ENCODE measurements at regions of chr2 and their contacts with region 1.

Region 1: DNA sequence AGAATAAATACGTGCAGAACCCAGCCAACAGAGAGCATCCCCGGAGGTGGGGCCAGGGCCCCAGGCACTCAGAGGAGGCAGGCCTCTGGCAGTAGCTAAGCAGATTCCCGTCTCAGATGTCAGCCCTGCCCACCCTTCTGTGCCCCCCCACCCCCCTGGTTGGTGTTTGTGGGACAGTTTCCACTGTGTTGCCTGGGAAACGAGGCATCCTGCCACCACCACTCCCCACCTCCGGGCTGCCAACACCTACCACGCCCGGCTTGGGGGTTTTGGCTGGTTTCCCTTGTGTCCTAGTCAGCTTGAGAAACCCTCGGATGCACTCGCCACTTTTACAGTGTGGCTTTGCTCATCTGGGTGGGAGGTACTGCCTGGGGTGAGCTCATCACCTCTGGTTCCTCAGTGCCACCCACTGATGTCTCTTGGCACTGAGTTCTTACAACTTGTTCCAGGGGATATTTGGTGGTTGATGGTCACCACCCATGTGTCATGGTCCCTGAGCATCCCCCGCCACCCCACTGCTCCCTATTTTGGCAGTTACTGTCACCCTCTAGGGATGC is 72.4 kb upstream of the YWHAQ start:
- DNase-seq: peak; percentile 89 to 98 (median 94)
- H3K4me3 ChIP-seq: no peak overlapping the region
- H3K4me3 Mint-ChIP-seq: peak overlapping the region in 7 of 8 donors; percentile 11 to 80 (median 55)
- H3K27ac ChIP-seq: peak overlapping the region; percentile 88
- H3K27ac Mint-ChIP-seq: peak overlapping the region; percentile 94 to 98 (median 97)
- H3K4me1 ChIP-seq: peaks cover 50% of the 10 kb centered on the region
- H3K4me1 Mint-ChIP-seq: peaks cover 35 to 83% (median 52%) of the 10 kb centered on the region in 4 donors
- H3K27me3 ChIP-seq: no peaks in the 10 kb centered on the region
- H3K27me3 Mint-ChIP-seq: no peaks in the 10 kb centered on the region

Region 2: DNA sequence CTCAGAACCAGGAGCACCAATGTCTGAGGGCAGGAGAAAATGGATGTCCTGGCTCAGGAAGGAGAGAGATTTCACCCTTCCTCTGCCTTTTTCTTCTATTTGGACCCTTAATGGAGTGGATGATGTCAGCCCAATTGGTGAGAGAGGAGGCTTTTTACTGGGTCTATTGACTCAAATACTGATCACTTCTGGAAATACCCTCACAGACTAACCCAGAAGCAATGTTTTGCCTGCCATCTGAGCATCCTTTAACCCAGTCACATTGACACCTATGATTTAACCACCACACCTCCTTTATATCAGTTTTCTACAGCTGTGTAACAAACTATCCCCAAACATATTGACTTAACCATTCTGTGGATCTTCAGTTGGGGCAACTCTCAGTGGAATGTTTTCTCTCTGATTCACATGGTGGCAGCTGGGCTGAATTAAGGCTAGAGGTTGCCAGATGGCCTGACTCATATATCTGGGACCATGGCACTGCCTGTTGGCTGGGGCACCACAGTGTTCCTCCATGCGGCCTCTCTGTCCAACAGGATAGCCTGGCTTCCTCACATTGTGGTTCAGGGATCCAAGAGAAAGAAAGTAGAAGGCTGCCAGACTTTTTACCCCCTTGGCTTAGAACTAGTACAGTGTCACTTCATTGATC is 681.5 kb before region 1 on chr2:
- CTCF ChIA-PET with region 1: no interaction called
- POLR2A ChIA-PET with region 1: no interaction called
- intact Hi-C with region 1: no loop called
- DNase-seq: no peak
- H3K4me3 ChIP-seq: no peak overlapping the region
- H3K4me3 Mint-ChIP-seq: no peak overlapping the region
- H3K27ac ChIP-seq: no peak overlapping the region
- H3K27ac Mint-ChIP-seq: no peak overlapping the region
- H3K4me1 ChIP-seq: no peaks in the 10 kb centered on the region
- H3K4me1 Mint-ChIP-seq: no peaks in the 10 kb centered on the region
- H3K27me3 ChIP-seq: no peaks in the 10 kb centered on the region
- H3K27me3 Mint-ChIP-seq: peaks cover 16 to 48% of the 10 kb centered on the region in 2 donors

Region 3: GRCh38 chr2:9463698-9464034 is 239.5 kb before region 1 on chr2:
- CTCF ChIA-PET with region 1: no interaction called
- POLR2A ChIA-PET with region 1: no interaction called
- intact Hi-C with region 1: no loop called
- DNase-seq: no peak
- H3K4me3 ChIP-seq: no peak overlapping the region
- H3K4me3 Mint-ChIP-seq: no peak overlapping the region
- H3K27ac ChIP-seq: no peak overlapping the region
- H3K27ac Mint-ChIP-seq: peak overlapping the region in 1 of 7 donors; percentile 81
- H3K4me1 ChIP-seq: no peaks in the 10 kb centered on the region
- H3K4me1 Mint-ChIP-seq: peaks cover 0 to 10% (median 4%) of the 10 kb centered on the region in 4 donors
- H3K27me3 ChIP-seq: no peaks in the 10 kb centered on the region
- H3K27me3 Mint-ChIP-seq: no peaks in the 10 kb centered on the region

Region 4: GRCh38 chr2:9681427-9681817 is 21.7 kb before region 1 on chr2:
- CTCF ChIA-PET with region 1: interaction called, 4 read pairs
- POLR2A ChIA-PET with region 1: interaction called, 11 read pairs
- intact Hi-C with region 1: no loop called
- DNase-seq: peak; percentile 61 to 70 (median 66)
- H3K4me3 ChIP-seq: no peak overlapping the region
- H3K4me3 Mint-ChIP-seq: peak overlapping the region in 7 of 8 donors; percentile 32 to 76 (median 55)
- H3K27ac ChIP-seq: peak overlapping the region; percentile 44
- H3K27ac Mint-ChIP-seq: peak overlapping the region; percentile 42 to 94 (median 87)
- H3K4me1 ChIP-seq: peaks cover 16% of the 10 kb centered on the region
- H3K4me1 Mint-ChIP-seq: peaks cover 11 to 19% (median 16%) of the 10 kb centered on the region in 4 donors
- H3K27me3 ChIP-seq: no peaks in the 10 kb centered on the region
- H3K27me3 Mint-ChIP-seq: no peaks in the 10 kb centered on the region

Region 5: DNA sequence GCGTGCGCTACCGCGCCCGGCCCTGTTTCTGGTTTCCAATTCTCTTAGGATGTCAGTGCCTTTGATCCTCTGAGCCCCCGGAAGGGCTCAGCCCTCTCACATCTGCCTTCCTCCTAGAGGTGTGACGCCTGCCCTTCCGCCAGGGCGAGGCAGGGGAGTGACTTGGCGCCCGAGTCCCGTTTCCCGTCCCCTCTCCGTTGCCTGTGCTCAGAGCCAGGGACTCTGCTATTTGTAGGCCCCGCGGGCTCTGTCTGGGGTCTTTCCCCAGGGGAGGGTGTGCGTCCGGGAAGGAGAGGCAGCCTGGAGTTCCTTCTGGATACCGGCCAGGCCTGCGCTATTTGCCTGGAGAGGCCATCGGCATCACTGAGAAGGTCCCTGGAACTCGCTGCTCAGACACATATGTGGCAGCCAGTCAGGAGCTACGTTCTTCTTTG is 36.4 kb after region 1 on chr2:
- CTCF ChIA-PET with region 1: interaction called, 12 read pairs
- POLR2A ChIA-PET with region 1: interaction called, 22 read pairs
- intact Hi-C with region 1: loop called (anchors 5 kb)
- DNase-seq: peak; percentile 48 to 70 (median 54)
- H3K4me3 ChIP-seq: peak overlapping the region in 1 of 2 donors; percentile 27
- H3K4me3 Mint-ChIP-seq: peak overlapping the region; percentile 73 to 97 (median 87)
- H3K27ac ChIP-seq: peak overlapping the region; percentile 62
- H3K27ac Mint-ChIP-seq: peak overlapping the region; percentile 87 to 99 (median 96)
- H3K4me1 ChIP-seq: peaks cover 49% of the 10 kb centered on the region
- H3K4me1 Mint-ChIP-seq: peaks cover 34 to 70% (median 48%) of the 10 kb centered on the region in 4 donors
- H3K27me3 ChIP-seq: no peaks in the 10 kb centered on the region
- H3K27me3 Mint-ChIP-seq: no peaks in the 10 kb centered on the region

Region 6: GRCh38 chr2:9753276-9753600 is 50.1 kb after region 1 on chr2:
- CTCF ChIA-PET with region 1: interaction called, 3 read pairs
- POLR2A ChIA-PET with region 1: interaction called, 18 read pairs
- intact Hi-C with region 1: loop called (anchors 2 kb)
- DNase-seq: peak in 4 of 5 donors; percentile 35 to 79 (median 48)
- H3K4me3 ChIP-seq: peak overlapping the region in 1 of 2 donors; percentile 52
- H3K4me3 Mint-ChIP-seq: peak overlapping the region; percentile 80 to 96 (median 94)
- H3K27ac ChIP-seq: peak overlapping the region; percentile 53
- H3K27ac Mint-ChIP-seq: peak overlapping the region; percentile 90 to 100 (median 99)
- H3K4me1 ChIP-seq: peaks cover 49% of the 10 kb centered on the region
- H3K4me1 Mint-ChIP-seq: peaks cover 29 to 72% (median 50%) of the 10 kb centered on the region in 4 donors
- H3K27me3 ChIP-seq: no peaks in the 10 kb centered on the region
- H3K27me3 Mint-ChIP-seq: no peaks in the 10 kb centered on the region

Region 7: GRCh38 chr2:9770308-9771100 is 67.3 kb after region 1 on chr2:
- CTCF ChIA-PET with region 1: interaction called, 10 read pairs
- POLR2A ChIA-PET with region 1: interaction called, 3 read pairs
- intact Hi-C with region 1: no loop called
- DNase-seq: peak; percentile 49 to 63 (median 58)
- H3K4me3 ChIP-seq: no peak overlapping the region
- H3K4me3 Mint-ChIP-seq: peak overlapping the region in 1 of 8 donors; percentile 55
- H3K27ac ChIP-seq: no peak overlapping the region
- H3K27ac Mint-ChIP-seq: peak overlapping the region in 5 of 7 donors; percentile 15 to 88 (median 46)
- H3K4me1 ChIP-seq: peaks cover 20% of the 10 kb centered on the region
- H3K4me1 Mint-ChIP-seq: peaks cover 3 to 21% (median 13%) of the 10 kb centered on the region in 4 donors
- H3K27me3 ChIP-seq: no peaks in the 10 kb centered on the region
- H3K27me3 Mint-ChIP-seq: no peaks in the 10 kb centered on the region

Measured in CD4-positive, alpha-beta memory T cell (primary cell).